Activated naive CD4-positive, alpha-beta T cell treated with anti-CD3 and anti-CD28 coated beads for 36 hours (primary cell): ENCODE measurements at regions of chr7 and their contacts with region 1.

Region 1: GRCh38 chr7:28292834-28293526 is 112.4 kb upstream of the JAZF1 start:
- DNase-seq: peak; percentile 39
- H3K4me3 Mint-ChIP-seq: no peak overlapping the region
- H3K27ac Mint-ChIP-seq: no peak overlapping the region
- H3K4me1 Mint-ChIP-seq: peaks cover 20% of the 10 kb centered on the region
- H3K27me3 Mint-ChIP-seq: peaks cover 25% of the 10 kb centered on the region

Region 2: GRCh38 chr7:28207486-28208158 is 85.4 kb before region 1 on chr7:
- CTCF ChIA-PET with region 1: interaction called, 4 read pairs
- intact Hi-C with region 1: loop called (anchors 1 kb)
- DNase-seq: peak; percentile 30
- H3K4me3 Mint-ChIP-seq: no peak overlapping the region
- H3K27ac Mint-ChIP-seq: peak overlapping the region; percentile 43
- H3K4me1 Mint-ChIP-seq: peaks cover 39% of the 10 kb centered on the region
- H3K27me3 Mint-ChIP-seq: peaks cover 7% of the 10 kb centered on the region

Region 3: GRCh38 chr7:28239823-28240204 is 53.2 kb before region 1 on chr7:
- CTCF ChIA-PET with region 1: no interaction called
- intact Hi-C with region 1: loop called (anchors 1 kb)
- DNase-seq: peak; percentile 6
- H3K4me3 Mint-ChIP-seq: no peak overlapping the region
- H3K27ac Mint-ChIP-seq: no peak overlapping the region
- H3K4me1 Mint-ChIP-seq: peaks cover 9% of the 10 kb centered on the region
- H3K27me3 Mint-ChIP-seq: peaks cover 48% of the 10 kb centered on the region

Region 4: GRCh38 chr7:28408960-28409715 is 116.2 kb after region 1 on chr7:
- CTCF ChIA-PET with region 1: no interaction called
- intact Hi-C with region 1: loop called (anchors 2 kb)
- DNase-seq: peak; percentile 88
- H3K4me3 Mint-ChIP-seq: peak overlapping the region; percentile 80
- H3K27ac Mint-ChIP-seq: no peak overlapping the region
- H3K4me1 Mint-ChIP-seq: peaks cover 39% of the 10 kb centered on the region
- H3K27me3 Mint-ChIP-seq: peaks cover 67% of the 10 kb centered on the region